Mammary epithelial cell (primary cell): ENCODE measurements at regions of chr1 and their contacts with region 1.

Region 1: GRCh38 chr1:168225476-168226190 is at the start of gene SFT2D2:
- DNase-seq: peak; percentile 82
- H3K4me3 ChIP-seq: peak within 1 kb of the TSS; percentile 75 to 88 (median 82)
- H3K27ac ChIP-seq: peak within 1 kb of the TSS; percentile 78
- H3K4me1 ChIP-seq: peaks cover 30% of the 10 kb centered on the region
- H3K27me3 ChIP-seq: no peaks in the 10 kb centered on the region
- CTCF ChIP-seq: no peak
- total RNA-seq, gene SFT2D2: 47.3 to 56.6 TPM

Region 2: GRCh38 chr1:168261390-168261789 is 35.8 kb after region 1 on chr1:
- CTCF ChIA-PET with region 1: interaction called, 12 read pairs
- dilution Hi-C with region 1: no loop called
- in situ Hi-C with region 1: no loop called
- intact Hi-C with region 1: no loop called
- DNase-seq: peak; percentile 33
- H3K4me3 ChIP-seq: no peak overlapping the region
- H3K27ac ChIP-seq: peak overlapping the region; percentile 5
- H3K4me1 ChIP-seq: peaks cover 25% of the 10 kb centered on the region
- H3K27me3 ChIP-seq: no peaks in the 10 kb centered on the region
- CTCF ChIP-seq: no peak

Region 3: GRCh38 chr1:168312718-168313604 is 87.3 kb after region 1 on chr1:
- CTCF ChIA-PET with region 1: no interaction called
- dilution Hi-C with region 1: loop called (anchors 10 kb)
- in situ Hi-C with region 1: no loop called
- intact Hi-C with region 1: no loop called
- DNase-seq: peak; percentile 62
- H3K4me3 ChIP-seq: no peak overlapping the region
- H3K27ac ChIP-seq: no peak overlapping the region
- H3K4me1 ChIP-seq: peaks cover 7% of the 10 kb centered on the region
- H3K27me3 ChIP-seq: no peaks in the 10 kb centered on the region
- CTCF ChIP-seq: no peak

Region 4: DNA sequence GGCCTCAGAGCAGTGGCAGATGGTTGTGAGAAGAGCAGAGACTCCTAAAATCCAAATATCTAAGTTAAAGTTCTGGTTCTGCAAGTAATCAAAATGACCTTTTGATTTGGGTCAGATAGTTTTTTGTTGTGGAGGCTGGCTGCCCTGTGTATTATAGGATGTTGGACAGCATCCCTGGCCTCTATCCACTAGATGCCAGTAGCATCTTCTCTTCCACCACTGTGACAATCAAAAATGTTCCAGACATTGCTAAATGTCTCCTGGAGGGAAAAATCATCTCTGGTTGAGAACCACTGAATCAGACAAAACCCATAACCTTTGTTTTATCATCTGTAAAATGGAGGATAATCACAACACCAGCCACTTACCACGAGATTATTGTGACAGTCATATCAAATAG is 509.3 kb after region 1 on chr1:
- CTCF ChIA-PET with region 1: no interaction called
- dilution Hi-C with region 1: no loop called
- in situ Hi-C with region 1: no loop called
- intact Hi-C with region 1: no loop called
- DNase-seq: no peak
- H3K4me3 ChIP-seq: no peak overlapping the region
- H3K27ac ChIP-seq: no peak overlapping the region
- H3K4me1 ChIP-seq: no peaks in the 10 kb centered on the region
- H3K27me3 ChIP-seq: no peaks in the 10 kb centered on the region
- CTCF ChIP-seq: peak in 1 of 2 donors; percentile 45